ENCODE measurements at regions of chr9 and their contacts with region 1.

Region 1: DNA sequence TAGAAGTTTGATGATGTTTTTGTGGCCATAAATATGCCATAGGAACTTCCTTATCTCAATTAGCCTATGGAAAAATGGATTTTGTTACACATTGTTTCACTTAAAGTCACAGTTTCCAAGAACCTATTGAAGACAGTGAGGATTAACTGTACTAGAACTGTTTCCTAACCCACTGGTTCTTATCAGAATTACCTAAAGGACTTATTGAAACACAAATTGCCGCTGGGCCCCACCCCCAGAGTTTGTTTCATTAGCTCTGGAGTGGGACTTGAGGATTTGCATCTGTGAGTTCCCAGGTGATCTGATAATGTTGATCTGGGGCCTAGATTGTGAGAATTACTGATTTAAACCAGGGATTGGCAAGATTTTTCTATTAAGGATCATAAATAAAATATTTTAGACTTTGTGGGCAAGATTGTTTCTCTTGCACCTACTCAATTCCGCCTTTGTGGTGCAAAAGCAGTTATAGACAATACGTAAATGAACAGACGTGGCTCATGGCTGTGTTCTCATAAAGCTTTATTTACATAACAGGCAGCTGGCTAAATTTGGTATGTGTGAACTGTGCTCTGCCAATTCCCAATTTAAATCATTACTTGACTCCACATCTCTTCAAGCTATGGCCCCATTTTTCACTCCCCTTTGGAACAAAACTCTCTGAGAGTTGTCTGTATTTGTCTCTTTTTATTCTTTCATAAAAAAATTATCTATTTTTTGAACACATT is 9.3 kb downstream of the JAK2 start:
- DNase-seq: no peak
- H3K4me3 ChIP-seq: no peak overlapping the region
- H3K27ac ChIP-seq: no peak overlapping the region
- H3K4me1 ChIP-seq: peaks cover 10% of the 10 kb centered on the region
- H3K27me3 ChIP-seq: no peaks in the 10 kb centered on the region

Region 2: DNA sequence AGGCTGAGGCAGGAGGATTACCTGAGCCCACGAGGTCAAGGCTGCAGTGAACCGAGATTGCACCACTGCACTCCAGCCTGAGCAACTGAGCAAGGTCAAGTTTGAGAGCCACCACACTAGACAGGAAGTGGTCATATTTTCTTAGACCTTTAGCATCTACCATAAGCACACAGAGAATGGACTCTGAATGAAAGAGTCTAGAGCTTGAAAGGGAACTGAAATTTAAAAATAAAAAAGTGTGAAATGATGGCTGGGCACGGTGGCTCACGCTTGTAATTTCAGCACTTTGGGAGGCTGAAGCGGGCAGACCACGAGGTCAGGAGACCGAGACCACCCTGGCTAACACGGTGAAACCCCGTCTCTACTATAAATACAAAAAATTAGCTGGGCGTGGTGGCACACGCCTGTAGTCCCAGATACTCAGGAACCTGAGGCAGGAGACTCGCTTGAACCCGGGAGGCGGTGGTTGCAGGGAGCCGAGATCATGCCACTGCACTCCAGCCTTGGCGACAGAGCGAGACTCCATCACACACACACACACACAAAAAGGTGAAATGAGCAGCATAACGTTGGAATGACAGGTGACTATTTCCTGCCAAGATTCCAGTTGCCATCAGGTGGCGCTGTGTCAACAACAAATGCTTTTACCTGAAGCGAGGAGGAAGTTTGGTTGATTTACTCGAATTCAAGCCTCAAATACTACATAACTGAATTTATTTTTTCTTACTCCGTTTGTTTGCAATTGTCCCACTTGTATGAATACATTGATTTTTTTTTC is 232.0 kb before region 1 on chr9:
- in situ Hi-C with region 1: loop called (anchors 10 kb)
- DNase-seq: peak; percentile 69
- H3K4me3 ChIP-seq: no peak overlapping the region
- H3K27ac ChIP-seq: no peak overlapping the region
- H3K4me1 ChIP-seq: peaks cover 3% of the 10 kb centered on the region; the same call in 1 of the 2 replicates
- H3K27me3 ChIP-seq: no peaks in the 10 kb centered on the region; the same call in 1 of the 2 replicates

Region 3: GRCh38 chr9:4939118-4939561 is 55.2 kb before region 1 on chr9:
- in situ Hi-C with region 1: no loop called
- DNase-seq: no peak
- H3K4me3 ChIP-seq: no peak overlapping the region
- H3K27ac ChIP-seq: no peak overlapping the region
- H3K4me1 ChIP-seq: peaks cover 7% of the 10 kb centered on the region; the same call in 1 of the 2 replicates
- H3K27me3 ChIP-seq: no peaks in the 10 kb centered on the region